Aorta (tissue), 5 donors: ENCODE measurements at regions of chr9 and their contacts with region 1.

Region 1: GRCh38 chr9:127503947-127504782 is 52.9 kb downstream of the LRSAM1 start:
- DNase-seq: peak; percentile 91 to 94
- ATAC-seq: peak; percentile 82
- H3K4me3 ChIP-seq: no peak overlapping the region
- H3K27ac ChIP-seq: peak overlapping the region in 1 of 2 donors; percentile 4
- H3K4me1 ChIP-seq: no peaks in the 10 kb centered on the region
- H3K27me3 ChIP-seq: no peaks in the 10 kb centered on the region

Region 2: GRCh38 chr9:127347831-127348779 is 156.1 kb before region 1 on chr9:
- intact Hi-C with region 1: no loop called
- DNase-seq: no peak
- ATAC-seq: peak; percentile 71
- H3K4me3 ChIP-seq: no peak overlapping the region
- H3K27ac ChIP-seq: no peak overlapping the region
- H3K4me1 ChIP-seq: peaks cover 0 to 2% of the 10 kb centered on the region in 2 donors
- H3K27me3 ChIP-seq: no peaks in the 10 kb centered on the region

Region 3: DNA sequence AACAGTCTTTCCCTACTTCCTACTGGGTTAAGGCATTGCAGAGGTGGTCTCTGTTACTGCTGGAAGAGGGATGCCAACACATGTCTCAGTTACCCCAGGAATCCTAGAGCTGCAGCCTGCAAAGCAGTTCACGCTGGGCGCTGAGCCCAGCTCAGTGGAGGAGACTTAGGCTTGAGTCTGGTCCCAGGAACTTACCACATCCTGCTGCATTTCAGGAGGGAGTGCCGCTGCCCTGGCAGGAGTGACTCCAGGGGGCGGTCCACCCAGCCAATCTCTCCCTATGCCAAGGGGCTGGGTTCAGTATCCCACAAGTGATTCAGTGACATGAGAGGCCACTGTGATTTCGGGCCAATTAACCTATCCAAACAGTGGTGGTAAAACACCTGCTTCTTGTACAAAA is 219.3 kb after region 1 on chr9:
- intact Hi-C with region 1: loop called in 1 of 2 experiments (anchors 10 kb)
- DNase-seq: no peak
- ATAC-seq: no peak
- H3K4me3 ChIP-seq: no peak overlapping the region
- H3K27ac ChIP-seq: no peak overlapping the region
- H3K4me1 ChIP-seq: no peaks in the 10 kb centered on the region
- H3K27me3 ChIP-seq: no peaks in the 10 kb centered on the region